ENCODE measurements at regions of chr11 and their contacts with region 1.

Region 1: DNA sequence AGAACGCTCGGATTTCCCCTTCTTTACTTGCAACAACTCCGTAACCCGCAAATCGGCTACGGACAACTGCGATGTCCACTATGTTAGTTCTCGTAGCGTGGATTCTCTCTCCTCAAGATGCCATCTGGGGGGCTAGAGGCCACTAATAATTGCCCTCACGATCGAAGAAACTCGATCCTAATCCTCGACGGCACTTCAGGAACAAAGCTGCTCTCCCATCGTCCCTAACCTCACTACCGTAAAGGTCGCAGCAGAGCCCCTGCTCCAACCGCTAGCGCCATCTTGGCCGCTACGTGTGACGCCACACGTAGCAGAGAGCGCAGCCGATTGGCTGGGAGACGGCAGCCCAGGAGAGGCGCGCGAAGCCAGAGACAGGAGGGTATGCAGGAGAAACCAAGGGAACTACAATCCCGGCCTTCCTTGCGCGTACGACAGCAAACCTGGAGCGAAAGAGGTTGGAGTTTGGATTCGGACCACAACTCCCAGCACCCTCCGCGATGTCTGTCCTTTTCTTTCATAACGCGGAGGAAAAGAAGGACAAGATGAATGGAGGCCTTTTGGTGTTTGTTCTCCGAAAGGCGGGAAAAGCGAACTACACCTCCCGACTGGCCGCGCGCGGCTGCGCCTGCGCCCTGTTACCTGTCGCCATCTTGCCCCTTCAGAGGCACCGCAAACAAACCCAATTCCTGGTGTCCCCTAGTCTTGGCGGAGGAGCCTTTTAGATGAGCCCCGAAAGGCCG is at the start of gene EMSY:
- DNase-seq: peak; percentile 98
- ATAC-seq: peak; percentile 98
- total RNA-seq, gene EMSY: 17.9 TPM

Region 2: DNA sequence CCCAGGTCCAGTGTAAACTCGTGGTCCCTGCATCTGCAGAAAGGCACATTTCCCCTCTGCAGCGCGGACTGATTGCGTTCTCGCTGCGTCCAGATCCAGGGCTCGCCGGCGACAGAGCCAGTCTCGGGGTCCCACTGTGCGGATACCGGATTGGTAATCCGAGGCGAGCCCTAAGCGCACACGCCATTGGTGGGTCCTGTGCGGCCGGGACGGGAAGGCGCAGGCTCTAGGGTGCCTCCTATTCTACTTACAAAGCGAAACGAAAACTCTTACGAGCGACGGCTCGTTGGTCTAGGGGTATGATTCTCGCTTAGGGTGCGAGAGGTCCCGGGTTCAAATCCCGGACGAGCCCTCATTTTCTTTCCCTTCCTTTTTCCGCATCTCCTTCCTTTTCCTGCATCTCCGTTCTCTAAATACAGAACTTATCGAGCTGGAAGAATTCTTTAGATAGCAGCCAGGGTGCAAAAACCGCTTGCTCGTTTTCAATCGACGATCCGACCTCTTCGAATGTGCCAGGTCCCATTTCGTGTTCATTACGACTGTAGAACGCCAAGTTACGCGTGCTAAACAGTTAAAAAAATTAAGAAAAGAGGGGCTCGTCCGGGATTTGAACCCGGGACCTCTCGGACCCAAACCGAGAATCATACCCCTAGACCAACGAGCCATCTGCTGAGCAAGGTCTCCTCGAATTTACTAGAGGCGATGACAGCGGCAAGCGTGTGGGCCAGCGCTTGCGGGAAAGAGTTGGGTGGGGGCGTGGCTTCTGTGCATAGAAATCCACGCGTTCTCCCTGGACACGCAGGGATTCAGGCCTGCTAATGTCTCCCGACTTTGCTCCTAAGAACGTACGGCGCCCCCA is 209.1 kb before region 1 on chr11:
- intact Hi-C with region 1: loop called (anchors 2 kb)
- DNase-seq: peak; percentile 92
- ATAC-seq: peak; percentile 90

Region 3: DNA sequence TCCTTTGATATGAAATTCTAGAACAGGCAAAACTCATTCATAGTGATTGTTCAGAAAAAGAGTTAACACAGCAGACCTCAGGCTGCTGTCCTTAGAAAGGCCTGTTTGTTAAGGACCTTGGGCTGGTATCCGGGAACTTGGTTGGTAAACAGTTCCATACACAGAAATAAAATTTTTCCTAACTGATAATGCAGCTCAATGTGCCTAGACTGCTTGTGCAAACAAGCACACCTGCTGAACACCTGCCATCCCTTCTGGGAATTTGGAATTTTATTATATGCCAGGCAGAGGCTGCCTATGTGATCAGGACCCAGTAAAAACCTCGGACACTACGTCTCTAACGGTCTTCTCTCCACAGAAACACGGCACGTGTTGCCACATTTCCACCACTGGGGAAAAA is 75.1 kb before region 1 on chr11:
- intact Hi-C with region 1: no loop called
- DNase-seq: no peak
- ATAC-seq: no peak

Region 4: GRCh38 chr11:76380967-76381719 is 63.4 kb before region 1 on chr11 and contains the starts of genes GVQW3 and THAP12:
- intact Hi-C with region 1: loop called (anchors 1 kb)
- DNase-seq: peak; percentile 99
- ATAC-seq: peak; percentile 98
- total RNA-seq, gene GVQW3: 1.9 TPM
- total RNA-seq, gene THAP12: 19.4 TPM

Region 5: DNA sequence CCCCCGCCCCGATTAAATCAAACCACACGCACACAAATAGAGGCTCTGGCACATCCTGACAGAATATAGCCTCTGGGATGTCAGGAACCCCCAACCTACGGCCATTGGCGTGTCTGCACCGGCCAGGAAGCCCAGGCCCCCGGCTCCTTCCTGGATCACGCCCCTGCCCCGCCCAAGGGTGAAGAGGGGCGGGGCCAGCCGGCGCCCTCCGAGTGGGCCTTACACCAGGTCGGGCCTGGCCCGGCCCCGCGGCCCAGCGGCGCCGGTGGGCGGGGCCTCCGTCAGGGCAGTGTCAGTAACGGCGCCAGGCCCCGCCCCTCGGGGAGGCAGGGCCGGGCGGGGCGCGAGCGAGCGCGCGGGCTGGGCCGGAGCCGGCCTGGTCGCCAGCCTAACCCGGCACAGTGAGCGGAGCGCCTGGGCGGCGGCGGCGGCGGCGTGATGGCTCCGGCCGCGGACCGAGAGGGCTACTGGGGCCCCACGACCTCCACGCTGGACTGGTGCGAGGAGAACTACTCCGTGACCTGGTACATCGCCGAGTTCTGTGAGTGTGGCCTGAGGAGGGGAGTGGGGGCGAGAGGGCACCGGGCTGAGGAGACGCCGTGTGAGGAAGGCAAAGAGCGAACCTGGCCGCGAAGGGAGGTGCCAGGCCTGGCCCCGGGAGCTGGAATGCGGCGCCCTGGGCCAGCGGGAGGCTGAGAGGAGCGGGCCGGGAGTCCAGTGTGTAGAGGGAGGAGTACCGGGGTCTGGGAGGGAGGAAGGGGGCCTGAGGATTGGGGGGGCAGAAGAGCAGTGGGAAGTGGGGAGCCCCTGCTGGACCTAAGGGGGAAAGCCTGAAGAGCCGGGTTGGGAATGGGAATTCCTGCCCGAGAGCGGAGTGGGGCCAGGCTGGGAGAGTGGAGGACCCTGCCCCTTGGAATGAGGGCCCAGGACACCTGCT is 416.3 kb after region 1 on chr11 and contains the start of gene ACER3:
- intact Hi-C with region 1: loop called (anchors 2 kb)
- DNase-seq: peak; percentile 97
- ATAC-seq: peak; percentile 100
- total RNA-seq, gene ACER3: 9.9 TPM

Measured in Right ventricle myocardium inferior (tissue), 1 donor.